ENCODE measurements at regions of chr20 and their contacts with region 1.

Region 1: GRCh38 chr20:49219089-49219923 is at the start of gene DDX27:
- DNase-seq: peak; percentile 98
- H3K4me3 ChIP-seq: peak within 1 kb of the TSS; percentile 98
- H3K27ac ChIP-seq: peak within 1 kb of the TSS; percentile 78
- H3K27me3 ChIP-seq: no peaks in the 10 kb centered on the region
- CTCF ChIP-seq: no peak
- polyA plus RNA-seq, gene DDX27: 31.3 and 32.0 TPM in 2 replicates

Region 2: GRCh38 chr20:49148601-49149000 is 70.7 kb before region 1 on chr20:
- CTCF ChIA-PET with region 1: interaction called, 23 read pairs
- POLR2A ChIA-PET with region 1: no interaction called
- DNase-seq: no peak
- H3K4me3 ChIP-seq: no peak overlapping the region
- H3K27ac ChIP-seq: no peak overlapping the region
- H3K27me3 ChIP-seq: no peaks in the 10 kb centered on the region
- CTCF ChIP-seq: no peak

Region 3: DNA sequence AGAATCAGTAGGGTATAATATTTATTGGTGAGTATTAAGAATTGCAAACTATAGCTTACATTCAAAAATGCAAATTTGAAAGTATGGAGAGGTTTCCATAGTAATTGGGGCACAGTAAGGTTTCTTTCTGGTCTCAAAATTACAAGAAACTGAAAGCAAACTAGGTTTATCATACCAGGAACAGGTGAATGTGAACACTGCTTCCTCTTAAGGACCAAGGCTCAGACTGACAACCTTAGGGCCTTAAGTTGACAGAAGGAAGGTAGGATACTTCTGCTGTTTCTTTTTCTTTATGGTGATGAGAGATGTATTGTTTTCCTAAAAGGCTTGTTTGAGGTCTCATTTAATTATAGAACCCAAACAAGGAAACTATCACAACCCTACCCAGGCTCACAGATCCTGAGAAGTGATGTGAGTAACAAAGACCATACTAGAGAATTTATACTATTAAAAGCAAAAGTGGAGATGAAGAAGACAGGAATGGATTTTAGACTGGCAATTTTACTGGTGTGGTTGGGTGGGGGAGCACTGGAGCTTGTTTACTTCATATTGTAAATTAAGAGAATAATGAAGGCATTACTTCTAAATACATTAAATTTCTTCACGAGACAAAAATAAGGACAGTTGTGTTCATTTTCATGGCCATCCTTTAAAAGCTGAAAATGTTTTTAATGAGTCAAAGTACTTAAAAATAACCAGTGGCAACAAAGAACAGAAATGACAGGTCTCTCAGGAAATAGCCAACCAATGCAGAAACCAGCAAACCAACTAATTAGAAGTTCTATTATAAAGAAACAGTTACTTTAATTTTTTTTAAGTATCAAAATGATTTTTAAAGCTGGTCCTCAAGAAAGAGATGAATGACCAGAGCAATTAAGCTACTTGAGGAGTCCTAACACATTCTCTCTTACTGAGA is 52.5 kb before region 1 on chr20:
- CTCF ChIA-PET with region 1: interaction called, 29 read pairs
- POLR2A ChIA-PET with region 1: no interaction called
- DNase-seq: no peak
- H3K4me3 ChIP-seq: no peak overlapping the region
- H3K27ac ChIP-seq: no peak overlapping the region
- H3K27me3 ChIP-seq: no peaks in the 10 kb centered on the region
- CTCF ChIP-seq: no peak

Region 4: GRCh38 chr20:49186535-49187329 is 32.6 kb before region 1 on chr20:
- CTCF ChIA-PET with region 1: interaction called, 42 read pairs
- POLR2A ChIA-PET with region 1: interaction called, 3 read pairs
- DNase-seq: no peak
- H3K4me3 ChIP-seq: peak overlapping the region; percentile 82
- H3K27ac ChIP-seq: no peak overlapping the region
- H3K27me3 ChIP-seq: no peaks in the 10 kb centered on the region
- CTCF ChIP-seq: no peak

Region 5: GRCh38 chr20:49207076-49207475 is 12.2 kb before region 1 on chr20:
- CTCF ChIA-PET with region 1: interaction called, 36 read pairs
- POLR2A ChIA-PET with region 1: interaction called, 8 read pairs
- DNase-seq: no peak
- H3K4me3 ChIP-seq: no peak overlapping the region
- H3K27ac ChIP-seq: no peak overlapping the region
- H3K27me3 ChIP-seq: no peaks in the 10 kb centered on the region
- CTCF ChIP-seq: no peak

Measured in AG04450 (cell line).